HCT116 (cell line): ENCODE measurements at regions of chr17 and their contacts with region 1.

Region 1: DNA sequence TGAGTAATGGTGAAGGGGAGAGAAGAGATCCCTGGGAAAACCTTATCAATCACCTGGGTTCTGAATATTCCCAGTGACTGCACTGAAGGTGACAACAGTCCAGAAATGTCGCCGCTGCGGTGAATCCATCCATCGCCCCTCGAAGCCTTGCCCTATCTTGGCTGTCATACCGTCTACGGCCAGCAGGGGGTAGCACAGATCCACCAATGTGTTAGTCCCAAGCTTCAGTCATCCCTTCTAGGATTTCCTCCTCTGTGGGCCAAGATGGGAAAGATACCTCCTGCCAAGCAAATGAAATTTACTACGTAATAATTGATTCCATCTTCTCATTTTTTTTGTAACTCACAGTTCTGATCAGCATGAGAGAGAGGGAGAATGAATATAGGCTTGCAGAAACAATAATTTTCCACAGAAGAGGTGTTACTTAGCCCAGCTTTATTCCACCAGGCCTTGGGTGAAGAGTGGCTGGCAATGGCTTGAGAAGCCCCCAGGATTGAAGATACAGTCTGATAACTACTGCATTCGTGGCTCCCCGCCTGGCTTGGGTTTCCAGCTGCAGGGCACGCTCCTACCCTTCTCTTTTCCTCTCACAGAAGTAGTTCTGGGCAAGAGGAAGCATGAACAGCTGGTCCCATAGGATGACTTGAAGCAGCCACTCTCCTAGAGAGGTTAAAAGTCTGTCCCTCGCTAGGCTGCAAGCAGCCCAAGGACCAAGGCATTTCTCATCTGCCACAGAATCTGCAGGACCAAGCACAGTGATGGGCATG is 2.6 kb upstream of the FMNL1 start:
- DNase-seq: peak; percentile 67
- ATAC-seq: peak; percentile 80
- H3K4me3 ChIP-seq: no peak overlapping the region; a peak in 1 of 4 replicates
- H3K27ac ChIP-seq: no peak overlapping the region
- H3K4me1 ChIP-seq: peaks cover 0 to 29% of the 10 kb centered on the region in 2 experiments; a peak in 3 of 4 replicates
- H3K27me3 ChIP-seq: no peaks in the 10 kb centered on the region
- CTCF ChIP-seq: peak; percentile 87 to 96 (median 95)
- POLR2A ChIP-seq: no peak
- RAD21 ChIP-seq: peak; percentile 97

Region 2: DNA sequence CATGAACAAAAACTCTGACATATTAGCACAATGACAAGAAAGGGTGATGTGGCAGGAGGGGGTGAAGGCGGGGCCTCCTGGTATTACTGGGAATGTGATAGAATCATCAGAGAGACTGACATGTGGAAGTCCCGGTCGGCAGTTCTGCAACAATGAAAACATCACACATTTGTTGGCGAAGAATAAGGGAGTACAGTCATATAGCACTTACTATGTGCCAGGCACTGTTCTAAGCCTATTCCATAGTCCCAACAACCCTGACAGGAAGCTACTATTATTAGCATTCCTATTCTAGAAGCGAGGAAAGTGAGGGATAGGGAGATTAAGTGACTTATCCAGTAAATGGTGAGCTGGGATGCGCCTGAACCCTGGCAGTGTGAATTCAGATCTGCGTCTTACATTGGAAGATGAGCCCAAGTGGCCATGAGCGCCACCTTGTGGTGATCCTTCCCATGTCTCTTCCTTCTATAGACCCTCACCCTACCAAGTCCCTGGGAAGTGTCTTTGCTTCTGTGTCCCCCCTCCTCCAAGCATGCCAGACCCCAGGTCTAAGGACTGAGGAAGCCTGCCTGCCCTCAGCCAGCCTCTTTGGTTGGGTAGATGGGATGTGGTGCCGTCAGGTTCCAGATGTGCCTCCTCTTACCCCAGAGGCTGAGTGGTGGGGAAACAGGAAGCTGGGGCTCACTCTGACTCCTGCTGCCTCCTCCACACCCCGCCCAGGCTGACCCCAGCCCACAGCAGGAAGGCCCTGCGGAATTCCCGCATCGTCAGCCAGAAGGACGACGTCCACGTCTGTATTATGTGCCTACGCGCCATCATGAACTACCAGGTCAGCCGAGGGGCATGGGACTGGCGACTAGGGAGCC is 16.6 kb after region 1 on chr17:
- CTCF ChIA-PET with region 1: interaction called, 40 read pairs
- POLR2A ChIA-PET with region 1: no interaction called
- RAD21 ChIA-PET with region 1: interaction called, 5 to 6 read pairs
- intact Hi-C with region 1: loop called (anchors 1 kb)
- DNase-seq: peak; percentile 54
- ATAC-seq: peak; percentile 69
- H3K4me3 ChIP-seq: no peak overlapping the region
- H3K27ac ChIP-seq: no peak overlapping the region
- H3K4me1 ChIP-seq: peaks cover 12 to 19% of the 10 kb centered on the region in 2 experiments
- H3K27me3 ChIP-seq: no peaks in the 10 kb centered on the region
- CTCF ChIP-seq: peak; percentile 86 to 88 (median 86)
- POLR2A ChIP-seq: no peak
- RAD21 ChIP-seq: peak; percentile 71

Region 3: DNA sequence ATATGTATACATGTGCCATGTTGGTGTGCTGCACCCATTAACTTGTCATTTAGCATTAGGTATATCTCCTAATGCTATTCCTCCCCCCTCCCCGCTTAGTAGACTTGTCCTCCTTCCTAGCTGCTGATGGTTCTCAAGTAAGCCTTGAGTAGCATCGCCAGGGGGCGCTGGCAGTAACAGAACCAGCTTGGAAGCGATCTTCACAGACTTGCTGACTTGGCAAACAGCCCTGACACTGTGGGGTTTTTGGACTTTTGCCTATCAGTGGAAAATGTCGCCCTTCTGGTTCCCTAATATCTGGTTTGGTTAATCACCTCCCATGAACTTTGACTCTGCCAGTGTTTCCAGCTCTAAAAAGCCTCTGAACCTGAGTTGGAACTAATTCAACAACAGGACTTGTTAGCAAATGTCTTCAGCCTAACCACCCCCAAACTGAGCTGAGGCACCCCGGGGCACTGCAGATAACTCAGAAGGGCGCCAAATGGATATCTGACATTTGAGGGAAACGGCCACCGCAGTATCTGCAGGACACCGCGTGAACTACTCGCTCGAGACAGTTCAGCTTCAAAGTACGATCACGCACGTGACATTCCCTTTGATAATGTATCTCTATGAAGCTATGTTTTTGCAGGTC is 58.3 kb after region 1 on chr17:
- CTCF ChIA-PET with region 1: interaction called, 10 read pairs
- POLR2A ChIA-PET with region 1: interaction called, 3 read pairs
- RAD21 ChIA-PET with region 1: no interaction called
- intact Hi-C with region 1: no loop called
- DNase-seq: peak; percentile 90
- ATAC-seq: peak; percentile 87
- H3K4me3 ChIP-seq: no peak overlapping the region
- H3K27ac ChIP-seq: peak overlapping the region; percentile 36
- H3K4me1 ChIP-seq: peaks cover 17 to 38% of the 10 kb centered on the region in 2 experiments
- H3K27me3 ChIP-seq: no peaks in the 10 kb centered on the region
- CTCF ChIP-seq: peak; percentile 74 to 90 (median 89)
- POLR2A ChIP-seq: no peak
- RAD21 ChIP-seq: peak; percentile 91

Region 4: DNA sequence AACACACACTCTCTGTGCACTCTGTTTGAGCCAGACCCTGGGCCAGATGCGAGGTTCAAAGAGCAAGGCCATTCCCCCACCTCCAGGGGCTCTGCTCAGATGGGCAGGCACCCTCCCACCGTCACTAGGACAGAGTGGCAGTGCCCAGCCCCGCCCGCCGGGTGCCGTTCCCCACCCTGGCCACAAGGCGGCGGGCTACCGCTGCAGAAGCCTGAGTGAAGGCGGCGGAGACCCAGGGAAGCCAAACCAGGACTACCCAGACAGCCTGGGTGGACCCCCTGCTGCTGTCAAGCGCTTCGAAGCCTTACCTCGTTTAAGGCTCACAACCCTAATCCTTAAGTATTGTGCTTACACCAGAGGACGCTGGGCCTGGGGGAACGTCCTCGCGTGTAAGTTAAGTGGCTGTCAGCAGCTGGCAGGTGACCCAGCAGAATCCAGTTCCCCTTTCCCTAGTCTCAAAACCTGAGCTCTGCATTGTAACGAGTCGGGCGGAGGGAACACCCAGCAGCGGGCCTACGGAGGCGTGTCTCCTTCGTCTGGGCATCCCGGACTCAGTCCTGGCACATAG is 209.1 kb after region 1 on chr17:
- CTCF ChIA-PET with region 1: interaction called, 25 read pairs
- POLR2A ChIA-PET with region 1: interaction called, 6 read pairs
- RAD21 ChIA-PET with region 1: interaction called in 1 of 2 experiments, 3 read pairs
- intact Hi-C with region 1: loop called (anchors 2 kb)
- DNase-seq: peak; percentile 57
- ATAC-seq: peak; percentile 35
- H3K4me3 ChIP-seq: peak overlapping the region; percentile 3 to 8; a peak in 1 of 4 replicates
- H3K27ac ChIP-seq: no peak overlapping the region
- H3K4me1 ChIP-seq: peaks cover 16 to 56% of the 10 kb centered on the region in 2 experiments
- H3K27me3 ChIP-seq: no peaks in the 10 kb centered on the region
- CTCF ChIP-seq: peak; percentile 93 to 99 (median 99)
- POLR2A ChIP-seq: no peak
- RAD21 ChIP-seq: peak; percentile 98

Region 5: GRCh38 chr17:45852535-45853297 is 633.6 kb after region 1 on chr17:
- CTCF ChIA-PET with region 1: no interaction called
- POLR2A ChIA-PET with region 1: no interaction called
- RAD21 ChIA-PET with region 1: no interaction called
- intact Hi-C with region 1: loop called (anchors 10 kb)
- DNase-seq: peak; percentile 60
- ATAC-seq: peak; percentile 81
- H3K4me3 ChIP-seq: peak overlapping the region in 1 of 2 experiments; percentile 25; a peak in 3 of 4 replicates
- H3K27ac ChIP-seq: no peak overlapping the region
- H3K4me1 ChIP-seq: peaks cover 0 to 6% of the 10 kb centered on the region in 2 experiments; a peak in 2 of 4 replicates
- H3K27me3 ChIP-seq: no peaks in the 10 kb centered on the region
- CTCF ChIP-seq: peak; percentile 96 to 99 (median 99)
- POLR2A ChIP-seq: no peak
- RAD21 ChIP-seq: peak; percentile 98